Left lung (tissue), 14 donors: ENCODE measurements at regions of chr9 and their contacts with region 1.

Region 1: DNA sequence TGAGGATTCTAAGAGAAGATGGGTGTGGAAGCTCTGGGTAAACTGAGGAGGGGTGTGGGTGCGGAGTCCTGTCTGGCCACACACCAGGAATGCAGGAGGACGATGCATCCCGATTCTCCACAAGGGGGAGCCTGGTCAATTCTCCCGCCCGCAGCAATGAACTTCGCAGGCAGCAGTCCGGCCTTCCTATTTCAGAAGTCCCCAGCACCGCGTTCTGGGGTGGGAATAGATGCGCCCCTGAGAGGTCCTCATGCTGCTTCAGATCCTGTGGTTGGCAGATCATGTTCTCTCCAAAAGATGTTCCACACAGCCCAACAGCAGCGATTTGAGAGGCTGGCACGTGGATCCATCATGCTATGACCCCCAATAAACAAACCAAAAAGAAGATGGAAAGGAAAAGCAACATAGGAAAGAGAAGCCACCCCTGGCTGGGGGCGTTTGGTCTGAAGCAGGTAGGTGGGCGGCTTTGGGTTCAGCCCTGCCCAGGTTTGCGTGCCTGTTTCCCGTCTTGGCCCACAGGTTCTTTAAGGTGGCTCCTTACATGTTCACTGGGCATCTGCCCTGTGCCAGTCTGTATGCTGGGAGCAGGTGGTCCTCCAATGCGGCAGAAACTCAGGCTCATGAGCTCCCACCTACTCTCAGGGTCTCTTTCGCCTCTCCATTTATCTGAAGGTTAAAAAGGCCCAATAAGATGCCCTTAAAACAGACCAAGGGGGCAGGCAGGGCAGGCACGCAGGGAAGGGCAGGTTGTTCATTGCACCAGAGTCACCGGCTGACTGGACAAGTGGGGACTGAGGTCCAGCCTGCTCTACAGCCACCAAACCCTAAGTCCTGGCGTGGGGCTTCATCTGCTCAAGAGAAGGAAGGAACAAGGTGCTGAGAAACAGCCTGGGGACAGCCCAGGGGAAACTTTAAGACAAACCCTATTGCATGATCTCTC is 171.6 kb downstream of the PAX5 start:
- DNase-seq: peak in 3 of 4 donors; percentile 17 to 61 (median 30)
- ATAC-seq: peak; percentile 60
- H3K4me3 ChIP-seq: no peak overlapping the region
- H3K27ac ChIP-seq: no peak overlapping the region
- H3K4me1 ChIP-seq: no peaks in the 10 kb centered on the region
- H3K27me3 ChIP-seq: peaks cover 3 to 49% of the 10 kb centered on the region in 2 donors
- CTCF ChIP-seq: peak; percentile 44 to 47

Region 2: DNA sequence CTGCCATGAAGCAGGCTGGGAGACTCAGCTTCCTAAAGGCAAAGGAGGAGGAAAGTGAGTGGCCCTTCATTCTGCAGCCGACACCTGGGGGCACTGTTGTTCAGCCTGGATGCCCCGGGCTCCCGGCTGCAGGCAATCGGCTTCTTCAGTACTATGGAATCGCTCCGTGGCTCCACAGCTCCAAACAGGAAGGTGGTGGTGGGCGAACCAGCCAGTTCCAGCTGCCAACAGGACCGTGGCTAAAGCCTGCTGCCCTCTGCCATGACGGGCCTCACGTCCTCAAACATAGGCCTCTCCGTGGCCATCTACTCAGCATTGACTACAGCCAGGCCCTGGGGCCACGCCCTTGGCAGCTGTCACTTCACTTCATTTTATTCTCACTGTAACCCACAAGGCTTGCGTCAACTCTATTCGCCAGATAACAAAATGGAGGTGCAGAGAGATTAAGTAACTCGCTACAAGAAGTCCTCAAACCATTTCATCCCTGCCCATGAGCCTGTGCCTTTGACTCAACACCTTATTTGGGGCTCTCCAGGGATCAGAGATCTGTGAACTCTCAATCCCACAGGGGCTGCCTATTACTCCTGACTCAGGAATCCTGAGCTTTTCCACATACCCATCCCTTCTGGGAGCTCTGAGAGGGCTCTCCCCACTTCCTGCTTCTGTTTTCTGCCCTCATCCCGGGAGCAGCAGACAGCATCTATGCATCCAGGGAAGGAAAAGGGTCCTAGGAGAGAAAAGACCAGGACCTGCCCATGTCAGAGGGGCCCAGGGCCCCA is 133.6 kb after region 1 on chr9:
- intact Hi-C with region 1: loop called in 1 of 2 experiments (anchors 10 kb)
- DNase-seq: peak in 3 of 4 donors; percentile 18 to 50 (median 50)
- ATAC-seq: peak; percentile 89
- H3K4me3 ChIP-seq: no peak overlapping the region
- H3K27ac ChIP-seq: no peak overlapping the region
- H3K4me1 ChIP-seq: peaks cover 0 to 6% of the 10 kb centered on the region in 2 donors
- H3K27me3 ChIP-seq: peaks cover 13 to 68% of the 10 kb centered on the region in 2 donors
- CTCF ChIP-seq: peak; percentile 12 to 20